Ovary (tissue), 10 donors: ENCODE measurements at regions of chr5 and their contacts with region 1.

Region 1: DNA sequence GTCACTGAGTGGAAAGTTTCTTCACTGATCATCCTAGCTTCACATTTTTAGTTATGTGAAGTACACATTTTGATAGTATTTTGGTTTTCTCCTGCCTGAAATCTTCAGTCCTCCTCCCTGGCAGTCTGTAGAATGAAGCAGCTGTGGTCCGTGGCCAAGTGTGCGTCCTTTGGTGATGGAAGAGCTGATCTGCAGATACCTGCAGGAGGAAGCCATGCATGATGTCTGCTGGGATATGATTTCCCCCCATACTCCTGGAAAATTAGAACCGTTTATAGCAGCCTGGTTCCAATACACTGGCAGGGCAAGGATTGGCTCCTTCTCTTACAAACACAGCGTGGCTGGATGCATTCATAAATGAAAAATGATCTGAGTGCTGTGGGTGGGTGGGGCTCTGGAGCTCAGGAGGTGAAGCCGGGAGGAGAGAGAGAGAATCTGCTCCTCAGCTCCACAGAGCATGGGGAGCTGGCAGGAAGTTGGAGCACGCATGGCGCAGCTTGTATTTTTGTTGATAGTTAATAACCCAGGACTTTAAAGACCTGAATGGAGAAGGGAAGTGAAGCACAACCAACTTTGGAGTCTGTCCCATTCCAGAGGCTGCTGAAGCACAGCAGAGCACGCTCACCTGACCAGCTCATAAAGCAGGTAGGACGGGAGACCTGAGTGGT is 238.3 kb downstream of the GOLPH3 start:
- DNase-seq: peak; percentile 56 to 69 (median 63)
- H3K4me3 ChIP-seq: peak overlapping the region; percentile 38
- H3K27ac ChIP-seq: peak overlapping the region in 1 of 2 donors; percentile 74
- H3K4me1 ChIP-seq: peaks cover 4% of the 10 kb centered on the region
- H3K27me3 ChIP-seq: no peaks in the 10 kb centered on the region
- CTCF ChIP-seq: no peak
- EP300 ChIP-seq: no peak
- POLR2A ChIP-seq: peak; percentile 37

Region 2: GRCh38 chr5:32027717-32028321 is 92.0 kb after region 1 on chr5:
- intact Hi-C with region 1: loop called in 1 of 4 experiments (anchors 5 kb)
- DNase-seq: peak in 4 of 5 donors; percentile 45 to 79 (median 66)
- H3K4me3 ChIP-seq: no peak overlapping the region
- H3K27ac ChIP-seq: peak overlapping the region in 1 of 2 donors; percentile 29
- H3K4me1 ChIP-seq: peaks cover 8% of the 10 kb centered on the region
- H3K27me3 ChIP-seq: no peaks in the 10 kb centered on the region
- CTCF ChIP-seq: no peak
- EP300 ChIP-seq: no peak
- POLR2A ChIP-seq: no peak

Region 3: DNA sequence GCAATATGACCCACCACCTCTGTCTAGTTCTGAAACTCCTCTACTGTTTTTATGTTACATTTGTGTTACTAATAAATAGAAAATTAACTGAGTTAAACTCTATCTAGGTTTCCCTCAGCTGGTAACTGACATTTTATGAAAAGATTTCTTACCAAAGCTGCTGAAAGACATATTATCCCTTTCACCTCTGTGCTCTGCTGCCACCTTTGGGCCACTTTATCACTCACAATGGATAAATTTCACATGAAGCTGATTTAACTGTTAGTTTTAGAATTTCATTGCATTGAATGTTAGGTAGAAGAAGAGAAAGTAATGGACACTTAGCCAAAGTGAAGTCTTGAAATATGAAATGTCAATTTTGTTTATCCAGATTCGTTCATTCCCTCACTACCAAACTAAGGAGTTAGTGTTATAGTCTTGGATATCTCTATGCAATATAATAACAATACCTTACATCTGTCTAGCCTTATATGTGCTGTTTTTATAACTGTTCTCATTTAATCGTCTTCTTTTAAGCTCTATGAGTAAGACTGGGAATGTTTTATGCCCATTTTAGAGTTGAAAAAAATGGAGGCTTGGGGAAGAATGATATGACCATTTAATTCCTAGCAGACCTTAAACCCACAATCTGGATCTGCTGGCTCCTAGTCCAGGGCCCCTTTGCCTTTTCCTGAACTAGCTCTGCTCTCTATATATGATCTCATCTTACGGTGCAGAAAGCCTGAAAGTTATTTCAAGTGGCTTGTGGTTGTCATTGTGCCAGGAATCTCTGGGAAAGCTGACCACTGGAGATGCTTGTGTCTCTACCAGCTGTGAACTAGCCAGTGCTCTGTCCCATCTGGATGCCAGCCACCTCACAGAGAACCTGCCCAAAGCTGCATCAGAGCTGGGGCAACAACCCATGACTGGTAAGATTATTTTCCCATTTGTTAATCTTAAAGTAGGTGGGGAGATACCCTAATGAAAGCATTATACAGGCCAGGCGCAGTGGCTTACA is 141.2 kb after region 1 on chr5:
- intact Hi-C with region 1: loop called in 1 of 4 experiments (anchors 10 kb)
- DNase-seq: peak in 2 of 5 donors; percentile 57 to 71
- H3K4me3 ChIP-seq: no peak overlapping the region
- H3K27ac ChIP-seq: no peak overlapping the region
- H3K4me1 ChIP-seq: peaks cover 2% of the 10 kb centered on the region
- H3K27me3 ChIP-seq: no peaks in the 10 kb centered on the region
- CTCF ChIP-seq: peak; percentile 40 to 78 (median 72)
- EP300 ChIP-seq: no peak
- POLR2A ChIP-seq: no peak